Ascending aorta (tissue), 2 donors: ENCODE measurements at regions of chr15 and their contacts with region 1.

Region 1: GRCh38 chr15:57561041-57561711 is 30.5 kb upstream of the MYZAP start:
- DNase-seq: peak in 1 of 2 donors; percentile 79
- H3K4me3 ChIP-seq: peak overlapping the region in 1 of 2 donors; percentile 27
- H3K27ac ChIP-seq: no peak overlapping the region
- H3K4me1 ChIP-seq: peaks cover 0 to 3% of the 10 kb centered on the region in 2 donors
- H3K27me3 ChIP-seq: no peaks in the 10 kb centered on the region
- CTCF ChIP-seq: peak; percentile 83 to 92 (median 87)

Region 2: DNA sequence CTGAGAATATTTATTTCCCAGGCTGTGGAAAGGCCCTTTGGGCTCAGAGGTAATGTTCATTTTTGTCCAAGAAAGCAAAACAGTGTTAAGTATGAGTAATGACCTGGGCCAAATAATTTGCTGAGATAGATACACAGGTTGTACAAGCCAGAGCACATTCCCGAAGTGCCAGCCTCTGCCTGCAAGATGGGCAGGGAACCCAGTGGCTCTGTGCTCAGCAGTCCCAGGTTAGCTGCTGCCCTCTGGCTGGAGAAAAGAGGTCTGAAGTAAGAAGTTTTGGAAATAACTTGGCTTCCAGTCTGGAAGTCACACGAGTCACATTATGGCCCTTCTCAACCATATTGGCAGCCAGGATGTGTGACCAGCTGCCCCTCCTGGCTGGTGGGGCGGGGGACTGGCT is 50.8 kb after region 1 on chr15:
- intact Hi-C with region 1: loop called (anchors 1 kb)
- DNase-seq: peak in 1 of 2 donors; percentile 74
- H3K4me3 ChIP-seq: no peak overlapping the region
- H3K27ac ChIP-seq: peak overlapping the region in 1 of 2 donors; percentile 37
- H3K4me1 ChIP-seq: peaks cover 3% of the 10 kb centered on the region in 2 donors
- H3K27me3 ChIP-seq: no peaks in the 10 kb centered on the region
- CTCF ChIP-seq: peak; percentile 24 to 59 (median 28)

Region 3: DNA sequence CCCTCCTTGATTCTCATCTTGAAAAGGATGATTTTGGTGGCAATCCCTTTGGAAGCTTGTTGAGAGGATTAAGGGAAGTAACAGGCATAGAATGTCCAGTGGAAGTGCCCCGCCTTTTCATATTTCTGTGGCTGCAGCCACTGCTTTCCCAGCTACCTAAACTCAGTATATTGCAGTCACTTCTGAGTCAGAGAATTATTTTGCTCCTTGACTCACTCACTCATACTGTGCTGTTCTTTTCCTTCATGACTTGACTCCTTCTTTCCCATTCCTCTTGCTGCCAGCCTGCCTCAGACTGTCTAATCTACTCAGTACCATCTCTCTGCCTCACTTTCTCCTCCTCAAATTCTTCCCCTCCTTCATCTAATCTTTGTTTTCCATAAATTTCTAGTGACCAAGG is 118.8 kb after region 1 on chr15:
- intact Hi-C with region 1: no loop called
- DNase-seq: peak in 1 of 2 donors; percentile 71
- H3K4me3 ChIP-seq: no peak overlapping the region
- H3K27ac ChIP-seq: peak overlapping the region; percentile 62
- H3K4me1 ChIP-seq: peaks cover 0 to 5% of the 10 kb centered on the region in 2 donors
- H3K27me3 ChIP-seq: no peaks in the 10 kb centered on the region
- CTCF ChIP-seq: no peak

Region 4: GRCh38 chr15:57751177-57751800 is 190.1 kb after region 1 on chr15:
- intact Hi-C with region 1: no loop called
- DNase-seq: no peak
- H3K4me3 ChIP-seq: no peak overlapping the region
- H3K27ac ChIP-seq: no peak overlapping the region
- H3K4me1 ChIP-seq: peaks cover 0 to 2% of the 10 kb centered on the region in 2 donors
- H3K27me3 ChIP-seq: no peaks in the 10 kb centered on the region
- CTCF ChIP-seq: peak; percentile 26 to 55 (median 34)

Region 5: GRCh38 chr15:57861036-57861638 is 300.0 kb after region 1 on chr15:
- intact Hi-C with region 1: loop called (anchors 2 kb)
- DNase-seq: no peak
- H3K4me3 ChIP-seq: no peak overlapping the region
- H3K27ac ChIP-seq: no peak overlapping the region
- H3K4me1 ChIP-seq: no peaks in the 10 kb centered on the region
- H3K27me3 ChIP-seq: no peaks in the 10 kb centered on the region
- CTCF ChIP-seq: peak; percentile 70 to 83 (median 75)

Region 6: GRCh38 chr15:58070801-58071418 is 509.7 kb after region 1 on chr15:
- intact Hi-C with region 1: loop called (anchors 2 kb)
- DNase-seq: no peak
- H3K4me3 ChIP-seq: no peak overlapping the region
- H3K27ac ChIP-seq: no peak overlapping the region
- H3K4me1 ChIP-seq: no peaks in the 10 kb centered on the region
- H3K27me3 ChIP-seq: no peaks in the 10 kb centered on the region
- CTCF ChIP-seq: peak; percentile 44 to 73 (median 68)

Region 7: DNA sequence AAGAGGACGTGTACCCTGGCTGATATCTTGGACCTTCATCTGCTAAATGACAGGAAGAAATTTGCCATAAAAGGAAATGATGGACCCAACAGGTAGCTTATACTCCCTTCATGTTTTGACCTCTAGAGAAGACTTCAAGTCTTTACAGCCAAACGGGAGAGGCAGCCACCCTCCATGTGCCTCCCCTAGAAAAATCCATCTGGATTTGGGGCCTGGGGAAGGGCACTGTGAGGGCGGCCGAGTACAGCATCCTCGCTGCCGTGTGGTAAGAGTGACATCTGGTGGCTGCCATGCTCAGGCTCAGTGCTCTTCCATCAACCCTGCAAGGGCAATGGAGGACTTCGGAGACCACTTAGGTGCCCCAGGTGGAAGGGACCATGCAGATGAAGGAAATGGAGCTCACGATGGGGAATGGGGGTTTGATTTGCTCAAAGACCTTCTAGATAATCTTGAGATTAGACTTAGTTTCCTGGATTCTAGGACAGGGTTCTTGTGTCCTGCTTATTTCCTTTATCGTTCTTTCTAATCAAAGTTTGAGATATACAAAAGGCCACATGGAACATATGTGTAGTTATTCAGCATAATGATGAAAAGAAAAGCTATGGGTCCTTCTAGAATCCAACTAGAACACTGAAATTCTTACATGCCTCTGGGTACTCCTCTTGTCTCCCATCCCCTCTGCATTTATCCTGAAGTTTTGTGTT is 621.4 kb after region 1 on chr15:
- intact Hi-C with region 1: loop called (anchors 5 kb)
- DNase-seq: no peak
- H3K4me3 ChIP-seq: no peak overlapping the region
- H3K27ac ChIP-seq: no peak overlapping the region
- H3K4me1 ChIP-seq: no peaks in the 10 kb centered on the region
- H3K27me3 ChIP-seq: no peaks in the 10 kb centered on the region
- CTCF ChIP-seq: peak; percentile 51 to 64 (median 55)